ENCODE measurements at regions of chr11 and their contacts with region 1.

Region 1: DNA sequence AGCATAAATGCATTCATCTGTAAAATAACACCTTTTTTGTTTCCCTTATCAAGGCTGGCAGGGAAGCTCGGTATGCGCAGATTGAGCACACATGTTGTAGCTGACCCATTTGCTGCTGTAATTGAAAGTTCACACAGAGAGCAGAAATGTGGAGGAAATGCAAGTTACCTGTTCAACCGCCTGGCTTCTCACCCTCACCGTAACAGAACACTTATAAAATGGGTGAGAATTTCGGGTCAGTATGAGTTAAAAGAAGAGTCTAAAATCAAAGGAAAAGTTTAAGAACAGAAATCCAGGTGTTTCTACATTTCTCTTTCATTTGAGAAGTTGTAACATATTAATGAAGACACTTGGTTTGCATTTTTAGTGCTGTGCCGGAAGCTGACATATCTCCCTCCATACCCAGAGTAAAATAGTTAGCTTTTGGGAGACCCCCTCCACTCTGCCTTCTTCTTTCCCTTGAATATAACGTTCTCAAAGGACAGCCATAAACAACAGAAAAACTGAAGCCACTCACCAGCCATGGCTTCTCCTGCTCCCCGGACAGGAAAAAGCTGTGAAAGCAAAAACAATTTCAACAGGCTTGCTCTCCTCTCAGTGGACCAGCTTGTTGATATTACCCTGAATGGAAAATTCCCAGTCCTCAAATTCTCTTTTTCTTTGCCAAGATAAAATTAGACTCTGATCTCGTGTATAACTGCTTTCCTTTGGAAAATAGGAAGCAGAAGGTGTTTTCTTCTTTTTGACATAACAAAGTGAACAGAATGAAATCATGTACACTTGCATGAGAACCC is at the start of gene CASP12:
- DNase-seq: no peak
- ATAC-seq: peak; percentile 92
- H3K4me3 ChIP-seq: no peak within 1 kb of the TSS
- H3K27ac ChIP-seq: peak within 1 kb of the TSS; percentile 87
- H3K4me1 ChIP-seq: peaks cover 5% of the 10 kb centered on the region; the same call in 1 of the 2 replicates
- H3K27me3 ChIP-seq: no peaks in the 10 kb centered on the region
- CTCF ChIP-seq: no peak
- EP300 ChIP-seq: 0 out of 4 replicates have a peak, but pooled peaks of 1 of the 2 experiments have one; percentile 28
- POLR2A ChIP-seq: no peak
- RAD21 ChIP-seq: no peak
- polyA plus RNA-seq, gene CASP12: 0.14 TPM in 1 of 2 experiments, not detected in the other

Region 2: GRCh38 chr11:104792861-104793260 is 105.2 kb before region 1 on chr11:
- CTCF ChIA-PET with region 1: no interaction called
- POLR2A ChIA-PET with region 1: no interaction called
- RAD21 ChIA-PET with region 1: no interaction called
- SMC1A ChIA-PET with region 1: no interaction called
- in situ Hi-C with region 1: no loop called
- intact Hi-C with region 1: no loop called
- DNase-seq: no peak
- ATAC-seq: no peak
- H3K4me3 ChIP-seq: no peak overlapping the region
- H3K27ac ChIP-seq: no peak overlapping the region
- H3K4me1 ChIP-seq: no peaks in the 10 kb centered on the region
- H3K27me3 ChIP-seq: no peaks in the 10 kb centered on the region
- CTCF ChIP-seq: no peak
- EP300 ChIP-seq: no peak
- POLR2A ChIP-seq: no peak
- RAD21 ChIP-seq: no peak

Region 3: DNA sequence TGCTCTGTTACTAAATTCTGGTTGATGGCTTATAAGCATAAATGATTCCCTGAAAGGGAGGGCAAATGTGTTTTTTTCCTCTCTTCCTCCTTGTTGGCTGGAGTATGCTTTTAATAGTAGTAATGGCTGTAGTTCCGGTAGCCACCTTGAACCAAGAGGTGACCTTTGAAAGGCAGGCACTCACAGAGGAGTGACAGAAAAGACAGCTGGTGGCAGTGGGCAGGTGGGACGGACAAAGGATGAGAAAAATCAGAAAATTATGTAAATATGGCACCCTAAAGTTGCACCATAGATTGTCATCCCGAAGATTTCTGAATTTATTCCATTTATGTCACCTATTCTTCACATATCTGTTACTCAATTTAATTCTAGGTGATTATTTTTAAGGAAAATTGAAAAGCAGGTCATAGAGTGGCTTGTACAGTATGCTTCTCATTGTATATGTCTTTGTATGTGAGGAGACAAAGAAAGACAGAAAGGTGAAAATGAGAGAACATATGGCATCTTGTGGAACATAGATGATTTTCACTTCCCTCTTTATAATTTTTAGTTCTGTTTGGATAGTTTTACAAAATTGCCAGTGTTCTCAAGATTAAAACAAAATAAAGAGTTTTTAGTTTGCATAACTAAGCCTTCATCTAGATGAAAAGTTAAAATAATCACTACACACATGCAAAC is 16.8 kb before region 1 on chr11:
- CTCF ChIA-PET with region 1: interaction called, 3 read pairs
- POLR2A ChIA-PET with region 1: interaction called, 3 read pairs
- RAD21 ChIA-PET with region 1: interaction called, 10 read pairs
- SMC1A ChIA-PET with region 1: interaction called, 13 read pairs
- in situ Hi-C with region 1: no loop called
- intact Hi-C with region 1: no loop called
- DNase-seq: no peak
- ATAC-seq: peak; percentile 85
- H3K4me3 ChIP-seq: no peak overlapping the region
- H3K27ac ChIP-seq: peak overlapping the region; percentile 77
- H3K4me1 ChIP-seq: peaks cover 10% of the 10 kb centered on the region
- H3K27me3 ChIP-seq: no peaks in the 10 kb centered on the region
- CTCF ChIP-seq: no peak
- EP300 ChIP-seq: no peak
- POLR2A ChIP-seq: no peak
- RAD21 ChIP-seq: no peak